A673 (cell line): ENCODE measurements at regions of chr7 and their contacts with region 1.

Region 1: DNA sequence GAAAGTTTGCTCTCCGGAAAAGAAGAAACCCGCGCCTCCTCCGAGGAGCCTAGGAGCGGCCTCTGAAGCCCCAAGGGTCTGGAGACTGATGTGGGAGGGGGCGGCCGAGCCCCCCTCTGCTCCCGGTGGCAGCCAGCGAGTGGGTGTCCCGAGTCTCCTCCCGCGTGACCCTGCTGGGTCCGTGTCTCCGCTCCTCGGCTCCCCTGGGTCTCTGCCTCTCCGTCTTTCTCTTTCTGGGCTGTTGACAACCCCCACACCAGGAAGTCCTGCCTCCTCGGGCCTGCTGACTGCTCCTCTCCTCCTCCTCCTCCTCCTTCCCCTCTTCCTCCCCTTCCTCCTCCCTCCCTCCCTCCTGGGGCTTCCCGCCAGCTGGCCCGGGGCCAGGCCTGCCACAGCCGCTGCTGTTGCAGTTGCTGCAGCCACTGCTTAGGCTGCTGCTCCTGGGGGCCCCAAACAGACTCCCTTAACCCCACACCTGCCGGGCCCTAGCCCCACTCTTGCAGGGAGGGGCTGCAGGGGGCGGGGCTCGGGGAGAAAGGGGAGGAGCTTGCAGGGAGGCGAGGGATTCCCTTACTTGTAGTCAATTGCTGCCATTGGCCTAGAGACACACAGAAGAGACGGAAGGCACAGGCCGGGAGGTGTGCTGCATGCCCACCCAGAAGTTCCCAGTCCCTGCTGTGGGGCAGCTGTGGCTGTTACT is at the start of gene TSC22D4:
- DNase-seq: peak; percentile 96
- H3K4me3 ChIP-seq: peak within 1 kb of the TSS; percentile 87
- H3K27ac ChIP-seq: peak within 1 kb of the TSS; percentile 81
- H3K4me1 ChIP-seq: peaks cover 31% of the 10 kb centered on the region
- H3K27me3 ChIP-seq: no peaks in the 10 kb centered on the region
- CTCF ChIP-seq: no peak
- total RNA-seq, gene TSC22D4: 69.0 and 71.0 TPM in 2 replicates

Region 2: GRCh38 chr7:100538654-100539435 is 59.7 kb after region 1 on chr7 and contains the start of gene AGFG2:
- CTCF ChIA-PET with region 1: no interaction called
- POLR2A ChIA-PET with region 1: interaction called, 6 read pairs
- intact Hi-C with region 1: loop called (anchors 2 kb)
- DNase-seq: peak; percentile 100
- H3K4me3 ChIP-seq: peak within 1 kb of the TSS; percentile 59
- H3K27ac ChIP-seq: peak within 1 kb of the TSS; percentile 84
- H3K4me1 ChIP-seq: peaks cover 3% of the 10 kb centered on the region
- H3K27me3 ChIP-seq: no peaks in the 10 kb centered on the region
- CTCF ChIP-seq: no peak
- total RNA-seq, gene AGFG2: 12.8 and 15.3 TPM in 2 replicates

Region 3: DNA sequence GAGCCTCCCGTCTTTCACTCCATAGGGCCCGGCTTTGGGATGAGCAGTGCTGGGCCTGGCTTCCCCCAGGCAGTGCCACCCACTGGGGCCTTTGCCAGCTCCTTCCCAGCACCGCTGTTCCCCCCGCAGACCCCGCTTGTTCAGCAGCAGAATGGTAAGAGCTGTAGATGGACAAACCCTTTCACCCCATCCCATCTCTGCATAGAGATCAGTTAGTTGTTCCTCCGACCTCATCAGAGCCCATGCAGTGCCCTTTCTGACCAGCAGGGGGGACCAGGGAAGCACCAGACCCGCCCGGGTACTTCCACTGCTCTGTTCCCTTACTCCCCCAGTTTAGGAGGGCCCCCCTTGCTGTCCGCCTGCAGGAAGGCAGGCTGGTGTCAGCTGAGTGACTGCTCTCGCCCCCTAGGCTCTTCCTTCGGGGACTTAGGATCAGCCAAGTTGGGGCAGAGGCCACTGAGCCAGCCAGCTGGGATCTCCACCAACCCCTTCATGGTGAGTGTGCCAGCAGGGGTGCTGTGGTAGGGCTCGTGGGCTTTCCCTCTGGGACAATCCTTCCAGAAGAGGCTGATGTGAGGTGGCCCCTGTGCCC is 84.8 kb after region 1 on chr7:
- CTCF ChIA-PET with region 1: interaction called, 10 read pairs
- POLR2A ChIA-PET with region 1: no interaction called
- intact Hi-C with region 1: no loop called
- DNase-seq: peak; percentile 80
- H3K4me3 ChIP-seq: no peak overlapping the region
- H3K27ac ChIP-seq: no peak overlapping the region
- H3K4me1 ChIP-seq: no peaks in the 10 kb centered on the region
- H3K27me3 ChIP-seq: no peaks in the 10 kb centered on the region
- CTCF ChIP-seq: peak; percentile 95